ENCODE measurements at regions of chr17 and their contacts with region 1.

Region 1: GRCh38 chr17:27596566-27597187 is 34.3 kb upstream of the LGALS9 start:
- DNase-seq: no peak
- H3K4me3 ChIP-seq: no peak overlapping the region
- CTCF ChIP-seq: no peak

Region 2: DNA sequence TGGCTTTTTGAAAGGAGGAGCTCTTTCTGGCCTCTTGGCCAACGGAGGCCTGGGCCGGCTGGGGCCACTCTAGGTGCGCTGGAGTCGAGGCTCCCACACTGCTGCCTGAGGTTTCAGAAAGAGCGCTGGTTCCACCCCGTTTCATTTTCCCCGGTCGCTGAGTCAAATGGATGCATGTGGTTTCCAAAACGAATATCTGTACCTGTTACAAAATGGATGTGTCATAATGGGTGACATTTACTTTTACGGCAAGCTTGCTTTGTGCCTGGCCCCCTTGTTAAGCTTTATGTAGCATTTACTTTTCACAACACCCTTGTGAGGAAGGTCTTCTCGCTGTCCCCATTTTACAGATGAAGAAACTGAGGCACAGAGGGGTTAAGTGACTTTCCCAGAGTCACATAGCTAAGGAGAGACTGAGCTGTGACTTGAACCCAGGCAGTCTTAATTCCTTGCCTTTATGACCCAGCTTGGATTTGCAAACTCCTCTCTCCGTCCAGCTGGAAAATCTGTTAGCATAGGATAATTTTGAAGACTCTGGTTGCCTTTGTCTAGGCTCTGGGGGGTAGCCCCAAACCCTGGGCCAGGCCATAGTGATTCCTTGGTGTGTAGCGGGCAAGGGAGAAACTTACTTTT is 129.8 kb before region 1 on chr17:
- in situ Hi-C with region 1: loop called (anchors 5 kb)
- DNase-seq: no peak
- H3K4me3 ChIP-seq: no peak overlapping the region
- CTCF ChIP-seq: no peak

Region 3: DNA sequence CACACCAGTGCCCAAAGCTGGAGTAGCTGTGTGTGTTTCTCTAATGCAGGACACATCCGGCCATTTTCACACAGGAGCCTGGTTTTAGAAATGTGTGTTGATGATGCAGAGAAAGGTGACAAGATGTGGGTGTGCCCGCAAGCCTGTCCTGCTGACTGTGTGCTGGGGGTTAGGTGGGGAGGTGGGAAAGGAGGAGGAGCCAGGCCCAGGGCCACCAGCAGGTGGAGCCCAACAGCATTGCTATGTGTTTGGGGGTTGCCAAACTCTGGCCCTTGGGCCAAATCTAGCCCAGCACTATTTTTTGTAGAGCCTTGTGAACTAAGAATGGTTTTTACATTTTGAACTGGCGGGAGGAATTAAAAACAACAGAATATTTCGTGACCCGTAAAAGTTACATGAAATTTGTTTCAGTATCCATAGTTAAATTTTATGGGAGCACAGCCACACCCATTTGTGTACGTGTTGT is 27.4 kb before region 1 on chr17:
- in situ Hi-C with region 1: no loop called
- DNase-seq: no peak
- H3K4me3 ChIP-seq: no peak overlapping the region
- CTCF ChIP-seq: peak; percentile 72

Measured in astrocyte of the cerebellum (primary cell).